ENCODE measurements at regions of chr11 and their contacts with region 1.

Region 1: DNA sequence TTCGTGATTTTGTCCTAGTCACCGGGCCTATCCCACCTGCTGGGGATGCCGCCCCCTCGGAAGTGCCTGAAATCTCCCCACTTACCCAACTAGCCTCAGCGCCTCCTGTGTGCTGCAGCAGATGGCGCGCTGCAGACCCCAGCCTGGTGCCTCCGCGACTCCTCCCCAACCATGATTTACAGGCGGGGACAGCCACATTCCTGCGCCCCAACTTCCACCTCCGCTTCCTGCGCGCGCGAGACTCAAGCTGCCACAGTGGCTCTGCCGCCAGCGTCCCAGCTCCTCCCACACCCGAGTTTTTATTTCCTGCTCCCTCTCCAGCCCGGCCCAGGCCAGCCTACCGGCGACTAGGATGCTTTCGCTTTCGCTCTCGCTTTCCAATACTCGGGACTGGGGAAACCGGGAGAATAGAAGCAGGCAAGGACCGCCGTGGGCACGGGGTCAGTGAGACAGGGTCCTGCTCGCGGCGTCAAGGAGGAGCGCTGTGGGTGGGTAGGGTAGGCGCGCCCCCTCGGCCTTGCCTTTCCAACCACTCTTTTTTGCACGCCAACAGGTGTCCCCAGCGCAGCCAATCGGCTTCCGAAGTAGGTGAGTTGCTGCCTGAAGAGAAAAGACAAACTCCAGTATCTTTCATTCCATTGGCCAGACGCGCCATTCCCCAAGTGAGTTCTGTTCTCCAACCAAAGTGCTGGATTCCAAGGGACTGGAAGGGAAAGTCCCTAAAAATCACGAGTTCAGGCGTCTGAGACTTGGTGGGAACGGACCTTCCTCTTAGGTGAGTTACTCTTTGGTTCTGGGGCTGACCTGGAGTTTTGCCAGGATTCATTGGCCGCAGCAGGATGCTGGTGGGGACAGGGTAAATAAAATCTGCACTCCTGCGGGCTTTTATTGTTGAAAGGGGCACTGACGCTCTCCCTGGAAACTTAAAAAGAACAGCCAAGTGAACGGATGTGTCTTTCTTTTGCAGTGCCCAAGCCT is at the start of gene FAM111A:
- DNase-seq: peak; percentile 95
- H3K4me3 Mint-ChIP-seq: peak within 1 kb of the TSS; percentile 97
- H3K27ac Mint-ChIP-seq: peak within 1 kb of the TSS; percentile 98
- H3K4me1 Mint-ChIP-seq: peaks cover 50% of the 10 kb centered on the region
- H3K27me3 Mint-ChIP-seq: no peaks in the 10 kb centered on the region
- CTCF ChIP-seq: peak; percentile 6
- total RNA-seq, gene FAM111A: 26.3 and 27.7 TPM in 2 replicates

Region 2: GRCh38 chr11:58900479-58901420 is 242.1 kb before region 1 on chr11:
- CTCF ChIA-PET with region 1: no interaction called
- POLR2A ChIA-PET with region 1: no interaction called
- intact Hi-C with region 1: loop called (anchors 5 kb)
- DNase-seq: peak; percentile 77
- H3K4me3 Mint-ChIP-seq: no peak overlapping the region
- H3K27ac Mint-ChIP-seq: no peak overlapping the region
- H3K4me1 Mint-ChIP-seq: peaks cover 19% of the 10 kb centered on the region
- H3K27me3 Mint-ChIP-seq: no peaks in the 10 kb centered on the region
- CTCF ChIP-seq: peak; percentile 60

Region 3: DNA sequence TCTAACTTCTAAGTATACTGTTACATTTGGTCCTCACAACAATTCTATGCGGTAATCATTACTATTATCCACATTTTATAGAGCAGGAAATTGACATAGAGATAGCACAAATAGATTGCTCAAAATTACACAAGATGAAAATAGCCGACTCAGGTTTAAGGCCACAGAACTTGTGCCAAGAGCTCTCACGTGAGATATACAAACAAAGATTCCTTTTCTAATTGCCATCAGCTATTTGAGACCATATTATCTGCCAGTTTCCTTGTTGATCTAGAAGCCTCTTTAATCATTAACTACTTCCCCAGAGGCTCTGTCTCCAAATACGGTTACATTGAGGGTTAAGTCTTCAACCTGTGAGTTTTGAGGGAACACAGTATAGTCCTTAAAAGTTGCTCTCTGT is 117.7 kb before region 1 on chr11:
- CTCF ChIA-PET with region 1: no interaction called
- POLR2A ChIA-PET with region 1: no interaction called
- intact Hi-C with region 1: no loop called
- DNase-seq: no peak
- H3K4me3 Mint-ChIP-seq: no peak overlapping the region
- H3K27ac Mint-ChIP-seq: no peak overlapping the region
- H3K4me1 Mint-ChIP-seq: no peaks in the 10 kb centered on the region
- H3K27me3 Mint-ChIP-seq: peaks cover 81% of the 10 kb centered on the region
- CTCF ChIP-seq: no peak

Region 4: GRCh38 chr11:59106363-59107336 is 36.2 kb before region 1 on chr11 and contains the start of gene FAM111B:
- CTCF ChIA-PET with region 1: interaction called, 4 read pairs
- POLR2A ChIA-PET with region 1: interaction called, 21 read pairs
- intact Hi-C with region 1: loop called (anchors 2 kb)
- DNase-seq: peak; percentile 96
- H3K4me3 Mint-ChIP-seq: peak within 1 kb of the TSS; percentile 90
- H3K27ac Mint-ChIP-seq: peak within 1 kb of the TSS; percentile 47
- H3K4me1 Mint-ChIP-seq: peaks cover 26% of the 10 kb centered on the region
- H3K27me3 Mint-ChIP-seq: no peaks in the 10 kb centered on the region
- CTCF ChIP-seq: no peak
- total RNA-seq, gene FAM111B: 0.74 and 1.6 TPM in 2 replicates

Region 5: DNA sequence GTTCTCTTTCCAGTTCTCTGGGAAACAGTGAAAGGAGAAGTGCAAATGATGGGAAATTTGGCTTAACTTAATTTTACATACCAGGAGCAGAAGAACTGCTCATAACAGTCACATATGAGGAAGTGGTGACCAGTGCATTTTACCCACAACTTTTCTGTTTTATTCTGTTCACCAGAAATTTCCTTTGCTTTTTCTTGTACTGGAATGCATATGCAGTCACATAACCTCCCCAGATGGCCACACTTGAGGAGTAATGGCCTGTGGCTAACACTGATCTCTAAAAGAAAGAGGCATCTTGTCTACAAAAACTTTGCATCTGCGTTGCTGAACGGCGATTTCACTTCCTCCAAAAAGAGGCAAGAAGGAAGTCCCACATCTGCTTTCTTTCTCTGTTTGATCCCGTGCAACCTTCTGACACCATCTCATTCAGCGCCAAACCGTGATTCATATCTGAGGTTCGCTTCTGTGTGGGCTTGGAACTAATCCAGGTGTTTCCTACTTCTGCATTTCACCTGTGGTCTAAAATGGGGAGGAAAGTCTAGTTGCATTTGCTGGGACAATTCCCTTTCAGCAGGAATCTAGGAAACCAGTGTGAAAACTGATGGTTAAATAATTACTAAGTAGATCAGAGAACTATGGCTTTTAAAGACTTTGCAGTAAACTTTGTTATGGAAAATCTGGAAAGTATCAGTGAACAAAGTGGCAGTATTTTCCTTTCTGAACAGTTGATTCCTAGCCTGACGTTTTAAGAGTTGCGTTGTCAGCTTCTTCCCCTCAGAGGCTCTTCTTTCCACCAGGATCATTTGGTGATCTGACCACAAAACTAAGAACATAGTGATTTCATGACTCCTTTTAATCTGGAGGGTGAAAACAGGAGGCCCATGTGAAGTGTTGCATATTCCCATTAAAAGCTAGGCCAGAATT is 74.1 kb after region 1 on chr11:
- CTCF ChIA-PET with region 1: no interaction called
- POLR2A ChIA-PET with region 1: no interaction called
- intact Hi-C with region 1: no loop called
- DNase-seq: peak; percentile 88
- H3K4me3 Mint-ChIP-seq: no peak overlapping the region
- H3K27ac Mint-ChIP-seq: no peak overlapping the region
- H3K4me1 Mint-ChIP-seq: peaks cover 22% of the 10 kb centered on the region
- H3K27me3 Mint-ChIP-seq: peaks cover 28% of the 10 kb centered on the region
- CTCF ChIP-seq: no peak